ENCODE measurements at regions of chr1 and their contacts with region 1.

Region 1: DNA sequence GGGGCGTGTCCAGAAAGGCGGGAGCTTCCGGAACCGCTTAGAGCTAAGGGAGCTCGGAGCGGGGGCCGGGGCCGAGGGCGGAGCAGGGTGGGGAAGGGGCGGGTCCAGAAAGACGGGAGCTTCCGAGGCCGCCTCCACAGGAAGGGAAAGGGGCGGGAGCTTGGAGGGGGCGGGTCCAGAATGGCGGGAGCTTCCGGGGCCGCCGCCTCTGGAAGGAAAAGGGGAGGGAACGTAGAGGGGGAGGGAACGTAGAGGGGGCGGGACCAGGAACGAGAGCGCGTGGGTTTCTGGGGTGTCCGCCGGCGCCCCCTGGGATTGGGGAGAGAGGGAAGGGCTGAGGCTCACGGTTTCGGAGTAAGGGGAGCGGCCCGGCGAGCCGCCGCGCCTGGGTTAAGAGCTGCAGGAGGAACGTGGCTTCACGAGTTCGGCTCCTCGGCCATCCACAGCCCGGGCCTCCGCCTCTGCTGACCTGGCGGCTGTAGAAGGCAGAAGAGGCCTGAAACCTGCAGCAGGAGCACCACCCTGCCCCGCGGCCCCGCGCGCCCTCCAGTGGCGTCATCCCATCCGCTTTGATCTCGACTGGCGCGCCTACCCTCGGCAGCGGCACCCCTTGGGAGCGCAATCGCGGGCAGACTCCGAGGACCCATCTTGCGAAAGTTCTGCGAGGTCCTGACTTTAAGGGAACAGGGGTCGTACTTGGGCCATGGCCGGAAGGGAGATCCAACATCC is 22.9 kb upstream of the HPDL start:
- DNase-seq: peak; percentile 100
- H3K4me3 Mint-ChIP-seq: peak overlapping the region; percentile 89
- H3K27ac Mint-ChIP-seq: peak overlapping the region; percentile 96
- H3K4me1 Mint-ChIP-seq: peaks cover 29% of the 10 kb centered on the region
- H3K27me3 Mint-ChIP-seq: no peaks in the 10 kb centered on the region

Region 2: DNA sequence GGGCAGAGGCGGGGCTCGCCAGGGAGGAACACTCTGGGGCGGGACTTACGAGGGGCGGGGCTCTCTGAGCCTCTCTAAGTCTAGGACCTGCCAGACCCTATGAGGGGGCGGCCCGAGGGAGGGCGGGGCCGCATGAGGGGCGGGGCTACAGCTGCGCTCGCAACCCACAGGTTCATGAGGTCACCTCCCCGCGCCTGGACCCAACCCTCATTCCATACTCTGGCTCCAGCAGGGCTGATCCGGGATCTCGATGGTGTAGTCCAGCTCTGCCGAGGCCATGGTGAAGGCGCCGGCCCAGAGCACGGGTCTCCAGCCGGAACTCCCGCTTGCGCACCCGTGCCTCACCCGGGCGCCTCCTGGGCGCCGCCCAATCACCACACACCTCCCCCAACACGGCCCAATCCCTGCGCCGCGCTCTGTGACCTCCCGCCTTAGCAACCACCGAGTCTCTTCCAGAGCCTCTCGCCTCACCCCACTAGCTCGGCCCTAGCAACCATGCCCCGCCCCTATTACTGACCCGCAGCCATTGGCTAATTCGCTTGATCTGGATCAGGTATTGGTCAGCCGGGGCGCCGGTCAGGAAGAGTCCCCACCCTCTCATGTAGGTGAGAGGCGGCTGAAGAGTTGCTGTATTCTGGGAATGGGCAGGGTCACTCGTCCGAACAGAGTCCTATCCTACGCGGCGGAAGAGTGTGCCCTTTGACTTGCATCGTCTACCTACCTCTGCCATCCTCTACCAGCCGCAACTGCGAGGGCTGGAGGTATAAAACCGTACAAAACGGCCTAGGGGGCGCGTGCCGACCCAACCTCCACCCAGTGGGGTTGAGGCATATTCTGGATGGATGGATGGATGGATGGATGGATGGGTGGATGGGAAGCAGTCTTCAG is 629.4 kb before region 1 on chr1 and contains the starts of genes ARMH1 and TMEM53:
- CTCF ChIA-PET with region 1: no interaction called
- POLR2A ChIA-PET with region 1: no interaction called
- intact Hi-C with region 1: loop called (anchors 10 kb)
- DNase-seq: peak; percentile 99
- H3K4me3 Mint-ChIP-seq: peak within 1 kb of the TSS; percentile 83
- H3K27ac Mint-ChIP-seq: peak within 1 kb of the TSS; percentile 88
- H3K4me1 Mint-ChIP-seq: peaks cover 23% of the 10 kb centered on the region
- H3K27me3 Mint-ChIP-seq: no peaks in the 10 kb centered on the region
- total RNA-seq, gene ARMH1: 134 to 141 TPM
- total RNA-seq, gene TMEM53: 5.1 to 6.5 TPM

Region 3: GRCh38 chr1:44835738-44836675 is 467.7 kb before region 1 on chr1:
- CTCF ChIA-PET with region 1: interaction called, 15 read pairs
- POLR2A ChIA-PET with region 1: no interaction called
- intact Hi-C with region 1: loop called (anchors 5 kb)
- DNase-seq: peak; percentile 94
- H3K4me3 Mint-ChIP-seq: no peak overlapping the region
- H3K27ac Mint-ChIP-seq: no peak overlapping the region
- H3K4me1 Mint-ChIP-seq: peaks cover 8% of the 10 kb centered on the region
- H3K27me3 Mint-ChIP-seq: peaks cover 6% of the 10 kb centered on the region

Region 4: GRCh38 chr1:45205910-45206721 is 97.6 kb before region 1 on chr1 and contains the start of gene ZSWIM5:
- CTCF ChIA-PET with region 1: interaction called, 5 read pairs
- POLR2A ChIA-PET with region 1: no interaction called
- intact Hi-C with region 1: loop called (anchors 2 kb)
- DNase-seq: peak; percentile 71
- H3K4me3 Mint-ChIP-seq: peak within 1 kb of the TSS; percentile 83
- H3K27ac Mint-ChIP-seq: peak within 1 kb of the TSS; percentile 57
- H3K4me1 Mint-ChIP-seq: peaks cover 35% of the 10 kb centered on the region
- H3K27me3 Mint-ChIP-seq: no peaks in the 10 kb centered on the region
- total RNA-seq, gene ZSWIM5: 0.51 to 0.59 TPM

Region 5: DNA sequence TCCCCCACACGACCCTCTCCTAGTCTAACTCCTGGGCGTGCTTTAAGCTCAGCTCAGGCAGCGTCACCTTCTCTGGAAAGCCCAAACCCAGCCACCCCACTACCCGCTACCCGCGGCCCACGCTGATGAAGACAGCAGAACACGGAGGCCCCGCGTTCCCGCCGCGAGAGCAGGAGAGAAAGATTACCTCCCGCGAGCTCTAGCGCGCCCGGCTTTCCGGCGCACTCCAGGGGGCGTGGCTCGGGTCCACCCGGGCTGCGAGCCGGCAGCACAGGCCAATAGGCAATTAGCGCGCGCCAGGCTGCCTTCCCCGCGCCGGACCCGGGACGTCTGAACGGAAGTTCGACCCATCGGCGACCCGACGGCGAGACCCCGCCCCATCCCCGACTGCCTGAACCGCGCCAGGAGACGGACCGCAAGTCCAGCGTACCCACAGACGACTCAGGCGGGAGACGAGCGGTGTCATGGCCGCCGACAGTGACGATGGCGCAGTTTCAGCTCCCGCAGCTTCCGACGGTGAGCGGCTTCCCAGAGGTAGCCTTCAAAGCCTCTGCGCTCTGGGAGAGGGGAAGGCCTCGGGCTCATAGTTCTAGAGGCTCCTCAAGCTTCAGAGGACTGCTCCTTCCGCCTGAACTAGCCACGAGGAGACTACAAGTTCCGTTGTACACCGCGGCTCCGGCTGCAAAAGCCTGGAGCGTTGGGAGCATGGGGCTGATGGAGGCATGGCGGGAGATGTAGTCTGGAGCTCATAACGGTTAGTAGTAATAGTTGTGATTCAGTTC is 36.2 kb after region 1 on chr1 and contains the starts of genes MUTYH and TOE1:
- CTCF ChIA-PET with region 1: interaction called, 33 read pairs
- POLR2A ChIA-PET with region 1: interaction called, 56 read pairs
- intact Hi-C with region 1: loop called (anchors 1 kb)
- DNase-seq: peak; percentile 97
- H3K4me3 Mint-ChIP-seq: peak within 1 kb of the TSS; percentile 93
- H3K27ac Mint-ChIP-seq: peak within 1 kb of the TSS; percentile 98
- H3K4me1 Mint-ChIP-seq: peaks cover 34% of the 10 kb centered on the region
- H3K27me3 Mint-ChIP-seq: no peaks in the 10 kb centered on the region
- total RNA-seq, gene MUTYH: 49.2 to 51.8 TPM
- total RNA-seq, gene TOE1: 22.8 to 23.1 TPM

Measured in activated CD4-positive, alpha-beta memory T cell treated with anti-CD3 and anti-CD28 coated beads for 36 hours (primary cell).